WTC11 (cell line): ENCODE measurements at regions of chr10 and their contacts with region 1.

Region 1: GRCh38 chr10:84537447-84537931 is 209.1 kb downstream of the CCSER2 start:
- DNase-seq: peak; percentile 32
- ATAC-seq: peak; percentile 35
- H3K4me3 Mint-ChIP-seq: no peak overlapping the region
- H3K27ac Mint-ChIP-seq: no peak overlapping the region
- H3K4me1 Mint-ChIP-seq: peaks cover 40% of the 10 kb centered on the region
- H3K27me3 Mint-ChIP-seq: peaks cover 5% of the 10 kb centered on the region
- CTCF ChIP-seq: peak; percentile 62

Region 2: DNA sequence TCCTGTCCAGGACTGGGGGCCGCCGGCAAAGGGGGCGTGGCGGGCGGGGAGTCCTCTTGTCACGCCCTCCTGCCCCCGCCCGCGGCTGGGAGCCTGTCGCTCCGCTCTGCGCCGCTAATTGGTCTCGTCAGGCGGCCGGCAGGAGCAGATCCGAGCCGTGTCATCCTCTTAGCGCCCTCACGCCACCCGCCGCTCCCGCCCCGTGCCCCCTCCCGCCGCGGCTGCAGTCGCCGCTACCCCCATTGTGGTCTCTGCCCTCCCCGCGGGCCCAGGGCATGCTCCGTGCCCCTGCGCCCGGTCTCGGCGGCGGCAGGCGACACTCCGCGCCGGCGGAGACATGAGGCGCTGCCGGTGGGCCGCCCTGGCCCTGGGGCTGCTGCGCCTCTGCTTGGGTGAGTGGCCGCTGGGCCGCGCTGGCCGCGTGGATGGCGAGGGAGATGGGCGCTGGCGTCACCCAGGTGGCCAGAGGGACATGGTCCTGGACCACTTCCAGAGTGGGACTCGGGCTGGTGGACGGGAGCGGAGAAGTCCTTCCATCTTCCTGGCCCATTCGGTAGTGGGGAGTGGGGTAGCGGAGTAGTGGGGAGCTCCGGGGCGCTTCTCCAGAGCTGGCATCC is 343.0 kb before region 1 on chr10 and contains the start of gene CDHR1:
- CTCF ChIA-PET with region 1: no interaction called
- POLR2A ChIA-PET with region 1: no interaction called
- DNase-seq: peak; percentile 73
- ATAC-seq: peak; percentile 85
- H3K4me3 Mint-ChIP-seq: peak within 1 kb of the TSS; percentile 68
- H3K27ac Mint-ChIP-seq: no peak within 1 kb of the TSS
- H3K4me1 Mint-ChIP-seq: peaks cover 9% of the 10 kb centered on the region; the same call in 1 of the 2 replicates
- H3K27me3 Mint-ChIP-seq: peaks cover 57% of the 10 kb centered on the region
- CTCF ChIP-seq: no peak
- total RNA-seq, gene CDHR1: 5.0 to 7.2 TPM (median 6.4 TPM) in 3 replicates

Region 3: DNA sequence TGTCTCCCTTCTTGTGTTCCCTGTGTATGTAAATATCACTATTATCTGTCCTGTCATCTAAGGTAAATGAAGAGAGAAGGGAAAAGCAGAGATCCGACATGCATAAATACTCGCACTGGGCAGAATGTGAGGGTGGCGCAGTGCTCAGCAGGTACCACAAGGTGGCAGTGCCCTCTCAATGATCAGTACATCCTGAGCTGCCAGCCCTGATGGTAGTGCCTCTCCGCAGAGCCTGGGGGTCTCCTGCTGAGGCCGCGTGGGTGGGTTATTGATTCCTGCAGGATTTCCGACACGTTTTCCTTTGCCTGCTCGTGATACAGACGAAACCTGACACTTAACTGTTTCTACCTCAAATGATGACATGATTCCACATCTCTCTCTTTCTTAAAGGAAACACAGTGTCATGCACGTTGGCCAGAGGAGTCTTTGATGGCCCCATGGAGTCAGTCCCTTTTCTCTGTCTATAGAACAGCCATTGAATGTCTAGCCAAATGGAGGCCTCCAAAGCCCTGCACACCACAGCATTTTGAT is 272.8 kb before region 1 on chr10:
- CTCF ChIA-PET with region 1: interaction called, 261 read pairs
- POLR2A ChIA-PET with region 1: interaction called, 4 read pairs
- DNase-seq: peak; percentile 84
- ATAC-seq: peak; percentile 95
- H3K4me3 Mint-ChIP-seq: no peak overlapping the region
- H3K27ac Mint-ChIP-seq: no peak overlapping the region
- H3K4me1 Mint-ChIP-seq: peaks cover 13% of the 10 kb centered on the region
- H3K27me3 Mint-ChIP-seq: peaks cover 10% of the 10 kb centered on the region
- CTCF ChIP-seq: peak; percentile 78

Region 4: GRCh38 chr10:84375011-84375410 is 162.5 kb before region 1 on chr10:
- CTCF ChIA-PET with region 1: interaction called, 24 read pairs
- POLR2A ChIA-PET with region 1: no interaction called
- DNase-seq: peak; percentile 23
- ATAC-seq: 0 out of 2 replicates have a peak, but pooled peaks have one; percentile 22
- H3K4me3 Mint-ChIP-seq: no peak overlapping the region
- H3K27ac Mint-ChIP-seq: peak overlapping the region; percentile 14; the same call in 1 of the 2 replicates
- H3K4me1 Mint-ChIP-seq: peaks cover 3% of the 10 kb centered on the region; the same call in 1 of the 2 replicates
- H3K27me3 Mint-ChIP-seq: no peaks in the 10 kb centered on the region
- CTCF ChIP-seq: peak; percentile 34

Region 5: DNA sequence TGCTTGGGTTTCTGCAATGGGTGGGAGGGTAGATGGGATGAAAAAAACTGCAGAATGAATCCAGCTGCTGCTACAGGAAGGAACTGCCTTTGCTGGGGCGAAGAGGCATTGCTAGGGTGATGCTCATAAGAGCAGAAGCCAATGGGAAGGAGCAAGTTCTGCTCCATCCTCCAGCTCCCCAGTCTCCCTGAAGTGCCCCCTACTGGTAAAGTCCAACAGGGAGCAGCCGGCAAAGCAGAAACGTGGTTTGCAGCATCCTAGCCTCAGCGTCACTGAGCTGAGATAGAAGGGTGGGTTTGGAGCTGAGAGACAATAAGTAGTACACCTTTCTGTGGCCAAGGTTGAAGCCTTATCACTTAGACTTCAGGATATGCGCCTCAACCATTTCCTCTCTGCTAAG is 11.4 kb after region 1 on chr10:
- CTCF ChIA-PET with region 1: interaction called, 79 read pairs
- POLR2A ChIA-PET with region 1: interaction called, 3 read pairs
- DNase-seq: peak; percentile 66
- ATAC-seq: peak; percentile 90
- H3K4me3 Mint-ChIP-seq: no peak overlapping the region
- H3K27ac Mint-ChIP-seq: no peak overlapping the region
- H3K4me1 Mint-ChIP-seq: no peaks in the 10 kb centered on the region
- H3K27me3 Mint-ChIP-seq: no peaks in the 10 kb centered on the region; the same call in 1 of the 2 replicates
- CTCF ChIP-seq: peak; percentile 44

Region 6: DNA sequence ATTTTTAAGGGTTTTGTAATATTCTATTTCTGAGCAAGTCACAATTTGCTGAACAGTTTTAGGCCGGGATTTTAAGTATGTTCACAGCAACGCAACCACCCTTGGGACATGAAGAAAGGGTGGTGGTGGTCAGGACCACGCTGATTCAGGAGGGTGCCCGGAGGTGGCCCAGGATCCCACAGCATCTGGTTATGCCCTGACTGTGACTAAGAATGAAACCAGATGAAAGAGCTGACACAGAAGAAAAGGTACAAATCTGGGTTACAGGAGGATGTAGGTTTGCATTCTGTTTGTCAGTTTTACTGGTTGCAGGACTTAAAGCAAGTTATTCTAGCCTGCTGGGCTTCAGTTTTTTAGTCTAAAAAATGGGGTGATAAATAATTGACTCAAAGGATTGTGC is 70.6 kb after region 1 on chr10:
- CTCF ChIA-PET with region 1: interaction called, 95 read pairs
- POLR2A ChIA-PET with region 1: interaction called, 3 read pairs
- DNase-seq: no peak
- ATAC-seq: no peak
- H3K4me3 Mint-ChIP-seq: no peak overlapping the region
- H3K27ac Mint-ChIP-seq: no peak overlapping the region
- H3K4me1 Mint-ChIP-seq: peaks cover 21% of the 10 kb centered on the region
- H3K27me3 Mint-ChIP-seq: no peaks in the 10 kb centered on the region; the same call in 1 of the 2 replicates
- CTCF ChIP-seq: no peak